Vagina (tissue), 2 donors: ENCODE measurements at regions of chr22 and their contacts with region 1.

Region 1: DNA sequence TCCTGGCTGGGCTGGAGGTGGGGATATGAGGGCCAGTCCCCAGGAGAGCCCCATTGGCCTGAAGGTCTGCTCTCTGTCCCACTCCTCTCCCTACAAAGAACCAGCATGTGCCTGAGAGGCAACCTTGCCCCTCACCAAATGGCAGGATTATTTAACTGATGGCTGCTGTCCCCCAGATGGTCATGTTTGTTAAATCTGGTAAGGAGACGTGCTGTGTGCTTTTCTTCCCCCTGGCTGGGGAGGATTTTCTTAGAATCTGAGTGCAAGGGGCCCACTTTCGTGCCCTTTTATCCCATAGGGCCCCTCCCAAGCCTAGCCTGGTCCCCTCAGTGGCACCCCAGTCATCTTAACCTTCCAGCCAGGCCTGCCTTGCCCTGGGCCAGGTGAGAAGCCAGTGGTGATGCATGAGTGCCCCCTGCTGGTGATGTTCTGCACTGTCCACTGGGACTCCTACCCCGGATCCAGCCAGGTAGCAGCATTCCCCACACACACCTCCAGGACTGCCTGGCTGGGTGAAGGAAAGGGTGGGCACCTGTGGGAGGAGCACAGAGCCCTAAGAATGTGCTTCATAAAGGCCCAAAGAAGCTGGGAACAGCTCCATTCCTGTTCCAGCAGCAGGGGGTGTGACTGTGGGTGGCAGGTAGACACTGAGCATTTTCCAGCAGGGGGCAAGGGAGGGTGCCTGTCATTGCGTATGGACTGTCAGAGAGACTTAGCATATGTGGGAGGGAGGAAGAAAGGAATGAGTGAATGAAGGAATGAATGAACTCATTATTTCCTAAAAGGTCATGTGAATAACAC is 28.9 kb downstream of the MFNG start:
- DNase-seq: no peak
- H3K4me3 ChIP-seq: no peak overlapping the region
- H3K27ac ChIP-seq: no peak overlapping the region
- H3K4me1 ChIP-seq: no peaks in the 10 kb centered on the region
- H3K27me3 ChIP-seq: peaks cover 4% of the 10 kb centered on the region
- CTCF ChIP-seq: peak; percentile 57 to 81 (median 73)
- POLR2A ChIP-seq: no peak

Region 2: GRCh38 chr22:37328017-37328416 is 129.3 kb before region 1 on chr22:
- intact Hi-C with region 1: loop called (anchors 10 kb)
- DNase-seq: no peak
- H3K4me3 ChIP-seq: no peak overlapping the region
- H3K27ac ChIP-seq: no peak overlapping the region
- H3K4me1 ChIP-seq: no peaks in the 10 kb centered on the region
- H3K27me3 ChIP-seq: peaks cover 4% of the 10 kb centered on the region
- CTCF ChIP-seq: no peak
- POLR2A ChIP-seq: no peak

Region 3: DNA sequence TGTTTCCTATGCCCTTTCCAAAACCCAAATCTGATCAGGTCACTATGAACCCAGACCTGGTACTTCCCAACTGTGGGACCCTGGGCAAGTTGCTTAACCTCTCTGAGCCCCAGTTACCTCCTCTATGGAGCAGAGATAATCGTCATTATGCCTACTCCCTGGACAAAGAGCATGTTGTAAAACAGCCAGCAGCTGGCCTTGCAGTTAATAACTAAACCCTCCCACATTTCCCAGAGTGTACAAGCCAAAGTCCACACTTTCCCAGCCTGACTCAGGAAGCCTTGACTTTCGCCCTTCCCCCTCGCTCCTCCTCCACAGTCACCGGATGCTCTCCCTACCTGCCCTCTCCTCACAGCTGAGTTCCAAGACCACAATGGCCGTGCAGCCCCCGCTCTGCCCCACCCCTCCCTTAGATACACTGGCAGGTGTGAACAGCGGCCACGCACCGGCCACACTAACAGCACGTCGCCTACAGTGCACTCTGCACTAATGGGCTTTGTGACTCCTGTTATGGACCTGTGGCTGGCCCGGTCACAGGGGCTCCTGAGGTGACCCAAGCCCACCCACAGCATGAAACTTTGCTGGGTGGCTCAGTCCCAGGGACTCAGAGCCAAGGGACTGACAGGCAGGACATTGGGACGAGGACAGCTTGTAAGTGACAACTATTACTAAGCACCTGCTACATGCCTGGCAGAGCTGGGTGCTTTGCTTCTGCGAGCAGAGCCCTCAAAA is 44.5 kb after region 1 on chr22:
- intact Hi-C with region 1: no loop called
- DNase-seq: no peak
- H3K4me3 ChIP-seq: no peak overlapping the region
- H3K27ac ChIP-seq: no peak overlapping the region
- H3K4me1 ChIP-seq: peaks cover 21% of the 10 kb centered on the region
- H3K27me3 ChIP-seq: no peaks in the 10 kb centered on the region
- CTCF ChIP-seq: no peak
- POLR2A ChIP-seq: no peak